ENCODE measurements at regions of chr18 and their contacts with region 1.

Region 1: GRCh38 chr18:77084688-77085035 is 47.9 kb downstream of the MBP start:
- DNase-seq: no peak
- ATAC-seq: no peak
- H3K4me3 Mint-ChIP-seq: peak overlapping the region; percentile 52
- H3K27ac Mint-ChIP-seq: peak overlapping the region; percentile 80
- H3K4me1 Mint-ChIP-seq: peaks cover 47% of the 10 kb centered on the region
- H3K27me3 Mint-ChIP-seq: no peaks in the 10 kb centered on the region

Region 2: DNA sequence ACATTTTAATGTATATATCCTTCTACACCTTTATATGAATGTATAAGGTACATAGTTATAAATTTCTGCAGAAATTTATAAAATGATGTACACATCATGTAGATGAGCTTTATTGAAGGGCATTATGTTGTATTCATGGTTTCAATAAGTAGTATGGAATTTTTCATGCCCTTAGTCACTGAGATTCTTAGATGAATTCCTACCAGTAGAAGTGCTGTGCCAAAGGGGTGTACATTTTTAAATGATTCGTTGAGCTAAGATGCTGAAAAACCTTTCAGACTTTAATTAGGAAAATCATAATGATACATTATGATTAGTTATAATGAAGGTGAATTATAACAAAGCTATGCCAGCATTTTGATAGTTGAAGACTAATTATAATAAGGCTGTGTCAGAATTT is 147.1 kb before region 1 on chr18:
- POLR2A ChIA-PET with region 1: no interaction called
- DNase-seq: no peak
- ATAC-seq: no peak
- H3K4me3 Mint-ChIP-seq: no peak overlapping the region
- H3K27ac Mint-ChIP-seq: no peak overlapping the region
- H3K4me1 Mint-ChIP-seq: peaks cover 3% of the 10 kb centered on the region
- H3K27me3 Mint-ChIP-seq: no peaks in the 10 kb centered on the region

Region 3: DNA sequence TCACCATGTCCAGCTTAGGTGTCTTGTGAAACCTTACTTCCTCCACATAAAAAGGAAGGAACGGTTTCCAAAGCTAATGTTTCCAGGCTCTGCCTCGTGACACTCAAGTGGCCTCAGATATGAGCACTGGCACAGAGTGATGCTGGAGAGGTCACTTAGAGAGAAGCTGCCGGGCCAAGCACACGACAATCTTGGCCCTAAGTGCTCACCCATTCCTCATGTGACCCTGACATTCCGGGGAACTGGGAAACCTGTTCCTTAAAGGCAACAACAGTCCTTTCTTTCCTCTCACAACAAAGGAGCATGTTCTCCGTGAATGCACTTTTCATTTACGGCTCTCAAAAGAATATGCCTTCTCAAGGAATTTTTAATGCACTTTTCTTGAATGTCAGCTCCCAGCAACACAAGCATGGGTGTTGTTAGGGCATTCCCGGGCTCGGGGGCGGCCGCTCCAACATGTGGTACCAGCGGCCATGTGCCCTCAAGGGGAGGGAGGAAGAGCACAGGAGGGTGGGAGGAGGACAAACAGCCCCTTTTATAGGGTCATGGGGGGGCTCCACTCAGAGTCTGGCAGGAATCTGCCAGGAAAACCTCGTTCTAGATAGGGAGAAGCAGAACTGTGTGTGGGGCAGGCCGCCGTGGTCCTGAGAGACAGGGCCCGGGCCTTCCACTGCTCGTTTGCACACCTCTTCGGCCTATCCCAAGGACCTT is 70.7 kb before region 1 on chr18:
- POLR2A ChIA-PET with region 1: no interaction called
- DNase-seq: no peak
- ATAC-seq: no peak
- H3K4me3 Mint-ChIP-seq: no peak overlapping the region
- H3K27ac Mint-ChIP-seq: no peak overlapping the region
- H3K4me1 Mint-ChIP-seq: peaks cover 14% of the 10 kb centered on the region
- H3K27me3 Mint-ChIP-seq: no peaks in the 10 kb centered on the region

Region 4: GRCh38 chr18:77061946-77062517 is 22.6 kb before region 1 on chr18:
- POLR2A ChIA-PET with region 1: interaction called, 13 read pairs
- DNase-seq: no peak
- ATAC-seq: peak; percentile 3
- H3K4me3 Mint-ChIP-seq: peak overlapping the region; percentile 85
- H3K27ac Mint-ChIP-seq: peak overlapping the region; percentile 97
- H3K4me1 Mint-ChIP-seq: peaks cover 75% of the 10 kb centered on the region
- H3K27me3 Mint-ChIP-seq: no peaks in the 10 kb centered on the region

Region 5: GRCh38 chr18:77073336-77074093 is 11.1 kb before region 1 on chr18:
- POLR2A ChIA-PET with region 1: no interaction called
- DNase-seq: no peak
- ATAC-seq: no peak
- H3K4me3 Mint-ChIP-seq: peak overlapping the region; percentile 1
- H3K27ac Mint-ChIP-seq: peak overlapping the region; percentile 50
- H3K4me1 Mint-ChIP-seq: peaks cover 35% of the 10 kb centered on the region
- H3K27me3 Mint-ChIP-seq: no peaks in the 10 kb centered on the region

Region 6: DNA sequence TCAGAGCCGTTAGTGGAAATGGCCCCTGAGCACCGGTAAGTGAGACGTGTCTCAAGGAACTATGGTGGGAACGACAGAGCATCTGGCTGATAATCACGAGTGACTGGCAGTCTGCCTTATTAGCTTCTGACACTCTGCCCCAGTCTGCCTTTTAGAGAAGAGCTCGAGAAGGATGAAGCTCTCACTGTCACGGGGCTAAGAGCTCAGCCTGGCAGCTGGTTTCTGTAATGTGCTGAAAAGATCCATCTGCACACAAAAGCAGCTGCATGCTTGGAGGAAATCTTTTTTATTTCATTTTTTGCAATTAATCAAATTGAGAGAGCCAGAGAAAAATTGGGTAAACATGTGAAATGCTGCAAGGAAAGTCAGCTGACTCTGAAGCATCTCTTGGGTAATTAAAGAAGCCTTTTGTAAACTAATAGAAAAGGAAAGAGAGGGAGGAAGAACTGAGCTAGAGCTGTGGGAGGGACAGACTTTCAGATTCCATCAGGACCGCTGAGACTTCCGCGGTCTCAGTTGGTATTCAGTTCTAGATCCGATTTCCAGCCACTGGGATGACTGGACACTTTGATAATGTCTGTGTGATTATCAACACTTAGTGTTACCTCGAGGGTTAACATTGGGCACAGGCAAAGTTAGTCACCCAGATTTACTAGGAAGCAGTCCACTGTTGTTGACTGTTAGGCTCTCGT is 23.5 kb after region 1 on chr18:
- POLR2A ChIA-PET with region 1: no interaction called
- DNase-seq: no peak
- ATAC-seq: peak; percentile 25
- H3K4me3 Mint-ChIP-seq: peak overlapping the region; percentile 41
- H3K27ac Mint-ChIP-seq: peak overlapping the region; percentile 62
- H3K4me1 Mint-ChIP-seq: peaks cover 58% of the 10 kb centered on the region
- H3K27me3 Mint-ChIP-seq: no peaks in the 10 kb centered on the region